ENCODE measurements at regions of chr3 and their contacts with region 1.

Region 1: DNA sequence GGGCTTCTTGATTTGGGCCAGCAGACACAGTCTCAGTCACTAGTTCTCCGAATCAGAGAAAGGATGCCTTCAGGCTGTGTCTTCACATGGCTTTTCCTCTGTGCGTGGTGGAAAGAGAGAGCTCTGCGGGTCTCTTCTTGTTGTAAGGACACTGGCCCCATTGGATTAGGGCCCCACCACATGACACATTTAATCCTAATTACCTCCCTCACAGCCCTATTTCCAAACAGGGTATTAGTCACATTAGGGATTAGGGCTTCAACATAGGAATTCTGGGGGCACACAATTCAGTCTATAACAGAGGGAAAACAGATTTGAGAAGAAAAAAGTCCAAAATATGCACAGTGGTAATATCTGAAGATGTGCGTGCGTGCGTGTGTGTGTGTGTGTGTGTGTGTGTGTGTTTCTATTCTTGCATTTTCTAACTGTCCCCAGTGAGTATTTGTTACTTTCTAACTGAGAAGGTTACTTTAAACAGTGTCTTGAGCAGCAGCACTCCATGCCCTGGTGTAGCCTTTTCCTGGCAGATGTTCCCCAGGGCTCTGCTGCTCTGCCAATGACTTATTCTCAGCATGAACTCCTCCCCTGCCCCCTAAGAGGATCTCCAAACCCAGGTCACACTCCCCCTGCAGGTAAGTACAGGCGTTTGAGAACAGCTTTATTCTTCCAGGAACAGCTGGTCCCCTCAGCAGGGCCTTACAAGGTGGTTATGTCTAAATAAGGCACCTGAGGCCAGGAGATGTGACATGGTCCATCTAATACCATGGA is 72.9 kb downstream of the RPL39L start:
- DNase-seq: peak; percentile 66
- H3K4me3 Mint-ChIP-seq: no peak overlapping the region
- H3K27ac Mint-ChIP-seq: peak overlapping the region; percentile 79
- H3K4me1 Mint-ChIP-seq: peaks cover 66% of the 10 kb centered on the region
- H3K27me3 Mint-ChIP-seq: no peaks in the 10 kb centered on the region

Region 2: GRCh38 chr3:186849374-186849975 is 216.9 kb before region 1 on chr3:
- CTCF ChIA-PET with region 1: interaction called, 17 read pairs
- intact Hi-C with region 1: loop called (anchors 1 kb)
- DNase-seq: peak; percentile 45
- H3K4me3 Mint-ChIP-seq: no peak overlapping the region
- H3K27ac Mint-ChIP-seq: no peak overlapping the region
- H3K4me1 Mint-ChIP-seq: peaks cover 12% of the 10 kb centered on the region
- H3K27me3 Mint-ChIP-seq: peaks cover 3% of the 10 kb centered on the region

Region 3: DNA sequence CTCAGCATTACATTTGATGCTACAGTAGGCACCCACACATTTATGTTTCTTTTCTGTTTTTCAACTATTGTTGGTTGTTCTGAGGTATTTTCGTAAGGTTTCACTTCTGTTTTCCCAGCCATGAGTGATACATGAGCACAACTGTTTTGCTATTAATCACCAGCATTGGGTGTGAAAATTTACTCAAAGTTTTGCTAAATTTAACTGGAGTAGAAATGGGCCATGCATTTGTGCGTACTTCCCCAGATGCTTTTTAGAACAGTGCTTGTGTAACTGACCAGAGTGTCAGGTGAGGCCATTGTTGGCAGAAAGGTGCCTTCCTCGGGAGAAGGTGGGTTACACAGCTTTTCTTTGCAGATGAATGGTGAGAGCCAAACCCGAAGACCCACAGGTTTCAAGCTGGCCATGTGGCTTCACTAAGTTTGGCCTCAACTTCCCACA is 65.7 kb before region 1 on chr3:
- CTCF ChIA-PET with region 1: no interaction called
- intact Hi-C with region 1: loop called (anchors 2 kb)
- DNase-seq: peak; percentile 76
- H3K4me3 Mint-ChIP-seq: peak overlapping the region; percentile 25
- H3K27ac Mint-ChIP-seq: peak overlapping the region; percentile 90
- H3K4me1 Mint-ChIP-seq: peaks cover 76% of the 10 kb centered on the region
- H3K27me3 Mint-ChIP-seq: no peaks in the 10 kb centered on the region

Region 4: GRCh38 chr3:187079090-187080022 is 12.9 kb after region 1 on chr3:
- CTCF ChIA-PET with region 1: no interaction called
- intact Hi-C with region 1: no loop called
- DNase-seq: no peak
- H3K4me3 Mint-ChIP-seq: no peak overlapping the region
- H3K27ac Mint-ChIP-seq: peak overlapping the region; percentile 52
- H3K4me1 Mint-ChIP-seq: peaks cover 2% of the 10 kb centered on the region
- H3K27me3 Mint-ChIP-seq: no peaks in the 10 kb centered on the region

Region 5: DNA sequence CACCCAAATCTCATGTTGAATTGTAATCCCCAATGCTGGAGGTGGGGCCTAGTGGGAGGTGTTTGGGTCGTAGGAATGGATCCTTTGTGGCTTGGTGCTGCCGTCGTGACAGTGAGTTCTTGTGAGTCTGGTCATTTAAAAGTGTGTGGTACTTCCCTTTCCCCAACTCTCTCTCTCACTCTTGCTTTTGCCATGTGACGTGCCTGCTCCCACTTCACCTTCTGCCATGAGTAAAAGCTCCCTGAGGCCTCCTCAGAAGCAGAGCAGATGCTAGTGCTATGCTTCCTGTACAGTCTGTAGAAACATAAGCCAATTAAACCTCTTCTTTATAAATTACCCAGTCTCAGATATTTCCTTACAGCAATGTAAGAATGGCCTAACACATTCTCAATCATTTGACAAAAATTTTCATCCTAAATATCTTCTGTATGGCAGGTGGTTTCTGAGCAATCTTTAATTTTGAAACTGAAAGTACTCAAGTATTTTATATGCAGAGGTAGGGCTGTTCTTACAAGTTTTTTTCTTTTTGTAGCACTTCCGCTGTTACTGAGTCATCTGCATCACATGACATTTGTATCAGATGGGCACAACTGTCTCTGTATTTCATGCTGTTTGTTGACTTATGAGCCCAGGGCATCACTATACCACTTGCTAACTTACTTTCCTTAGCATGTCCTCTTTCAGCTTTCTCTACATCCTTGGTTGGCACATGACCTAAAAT is 64.1 kb after region 1 on chr3:
- CTCF ChIA-PET with region 1: no interaction called
- intact Hi-C with region 1: loop called (anchors 2 kb)
- DNase-seq: peak; percentile 64
- H3K4me3 Mint-ChIP-seq: peak overlapping the region; percentile 42
- H3K27ac Mint-ChIP-seq: peak overlapping the region; percentile 98
- H3K4me1 Mint-ChIP-seq: peaks cover 40% of the 10 kb centered on the region
- H3K27me3 Mint-ChIP-seq: no peaks in the 10 kb centered on the region